B cell (primary cell): ENCODE measurements at regions of chr5 and their contacts with region 1.

Region 1: GRCh38 chr5:65481635-65482295 is at the start of gene ADAMTS6:
- DNase-seq: peak; percentile 85
- ATAC-seq: peak; percentile 87
- H3K4me3 ChIP-seq: peak within 1 kb of the TSS; percentile 69 to 99 (median 74)
- H3K4me3 Mint-ChIP-seq: no peak within 1 kb of the TSS
- H3K27ac ChIP-seq: peak within 1 kb of the TSS; percentile 55 to 81
- H3K27ac Mint-ChIP-seq: peak within 1 kb of the TSS; percentile 90
- H3K4me1 ChIP-seq: peaks cover 0 to 12% of the 10 kb centered on the region in 2 donors
- H3K4me1 Mint-ChIP-seq: peaks cover 7% of the 10 kb centered on the region
- H3K27me3 ChIP-seq: no peaks in the 10 kb centered on the region
- H3K27me3 Mint-ChIP-seq: no peaks in the 10 kb centered on the region
- CTCF ChIP-seq: no peak
- total RNA-seq, gene ADAMTS6: 11.9 and 12.3 TPM in 2 replicates

Region 2: GRCh38 chr5:64811050-64811640 is 670.6 kb before region 1 on chr5:
- CTCF ChIA-PET with region 1: interaction called, 131 read pairs
- POLR2A ChIA-PET with region 1: interaction called, 5 read pairs
- intact Hi-C with region 1: loop called (anchors 1 kb)
- DNase-seq: peak; percentile 56
- ATAC-seq: no peak
- H3K4me3 ChIP-seq: no peak overlapping the region
- H3K4me3 Mint-ChIP-seq: no peak overlapping the region
- H3K27ac ChIP-seq: no peak overlapping the region
- H3K27ac Mint-ChIP-seq: no peak overlapping the region
- H3K4me1 ChIP-seq: no peaks in the 10 kb centered on the region
- H3K4me1 Mint-ChIP-seq: no peaks in the 10 kb centered on the region
- H3K27me3 ChIP-seq: no peaks in the 10 kb centered on the region
- H3K27me3 Mint-ChIP-seq: no peaks in the 10 kb centered on the region
- CTCF ChIP-seq: peak; percentile 73

Region 3: DNA sequence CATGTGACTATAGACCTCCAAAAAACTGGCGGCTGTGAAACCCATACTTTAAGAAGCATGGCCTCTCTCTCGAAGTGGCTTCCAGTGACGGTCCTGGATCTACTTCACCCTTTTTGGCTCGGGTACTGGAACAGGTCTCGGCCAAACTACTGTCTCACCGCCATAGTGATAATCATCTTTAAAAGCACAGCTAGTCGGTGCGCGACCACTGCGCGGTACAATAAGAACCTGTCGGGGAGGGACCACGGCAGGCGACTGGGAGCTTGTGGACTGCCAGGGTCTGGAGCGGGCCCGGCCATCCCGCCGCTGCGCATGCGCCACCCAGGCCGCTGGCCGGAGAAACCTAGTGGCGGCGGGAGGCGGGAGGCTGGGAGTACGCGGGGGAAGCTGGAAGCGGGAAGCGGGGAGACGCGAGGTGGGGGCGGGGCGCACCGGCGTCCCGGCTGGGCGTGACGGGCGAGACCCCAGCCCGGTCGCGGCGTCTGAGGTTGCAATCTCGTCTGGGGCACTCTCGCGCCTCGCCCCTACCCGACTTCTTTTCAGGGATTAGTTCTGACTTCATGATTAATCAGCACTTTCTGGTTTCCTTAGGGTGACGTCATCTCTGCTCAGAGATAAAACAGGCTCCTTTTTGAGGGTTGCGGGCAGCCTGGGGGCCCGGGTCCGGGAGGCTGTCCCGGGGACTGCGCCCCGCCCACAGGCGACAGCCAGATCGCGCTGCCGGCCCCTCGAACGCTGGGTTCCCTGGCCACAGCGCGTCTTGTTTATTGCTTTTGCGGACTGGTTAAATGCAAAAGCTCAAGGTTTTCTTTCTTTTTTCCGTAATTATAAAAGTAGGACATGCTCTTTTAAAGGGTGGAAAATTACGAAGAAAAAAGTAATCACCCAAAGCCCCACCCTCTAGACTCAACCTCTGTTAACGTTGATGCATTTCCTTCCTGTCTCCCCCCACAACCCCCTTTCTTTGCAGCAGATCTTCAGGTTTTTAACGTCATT is 446.3 kb before region 1 on chr5:
- CTCF ChIA-PET with region 1: interaction called, 9 read pairs
- POLR2A ChIA-PET with region 1: no interaction called
- intact Hi-C with region 1: loop called (anchors 2 kb)
- DNase-seq: peak; percentile 83
- ATAC-seq: peak; percentile 81
- H3K4me3 ChIP-seq: peak overlapping the region; percentile 73 to 92 (median 85)
- H3K4me3 Mint-ChIP-seq: peak overlapping the region; percentile 88
- H3K27ac ChIP-seq: peak overlapping the region; percentile 78 to 89
- H3K27ac Mint-ChIP-seq: peak overlapping the region; percentile 88
- H3K4me1 ChIP-seq: peaks cover 25 to 30% of the 10 kb centered on the region in 2 donors
- H3K4me1 Mint-ChIP-seq: peaks cover 27% of the 10 kb centered on the region
- H3K27me3 ChIP-seq: no peaks in the 10 kb centered on the region
- H3K27me3 Mint-ChIP-seq: no peaks in the 10 kb centered on the region
- CTCF ChIP-seq: no peak

Region 4: DNA sequence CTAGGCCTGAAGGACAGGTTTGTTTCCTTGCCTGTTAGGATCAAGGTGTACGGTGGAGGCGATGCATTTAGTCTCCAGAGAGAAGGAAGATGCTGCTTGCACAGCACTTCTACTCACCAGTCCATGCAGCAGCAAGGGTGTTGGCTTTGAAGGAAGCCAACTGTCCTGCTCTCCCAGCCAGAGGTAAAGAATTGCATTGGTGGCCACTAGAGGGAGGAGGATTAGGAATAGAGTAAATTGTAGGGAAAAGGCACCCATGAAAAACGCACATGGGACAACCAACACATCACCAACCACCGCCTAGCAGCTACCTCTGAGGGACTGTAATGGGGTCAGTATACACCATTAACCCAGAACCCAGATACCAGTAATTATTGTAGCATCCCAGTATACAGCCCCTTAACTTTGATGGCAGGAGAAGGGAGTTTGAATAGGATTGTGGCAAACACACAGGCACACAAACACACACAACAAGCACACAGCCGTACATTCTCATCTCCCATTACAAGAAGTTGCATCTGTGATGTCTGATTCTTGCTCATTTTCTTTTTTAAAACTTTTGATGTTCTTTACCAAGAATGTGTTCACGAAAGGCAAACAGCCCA is 267.7 kb before region 1 on chr5:
- CTCF ChIA-PET with region 1: no interaction called
- POLR2A ChIA-PET with region 1: no interaction called
- intact Hi-C with region 1: loop called (anchors 10 kb)
- DNase-seq: peak; percentile 3
- ATAC-seq: no peak
- H3K4me3 ChIP-seq: no peak overlapping the region
- H3K4me3 Mint-ChIP-seq: no peak overlapping the region
- H3K27ac ChIP-seq: no peak overlapping the region
- H3K27ac Mint-ChIP-seq: no peak overlapping the region
- H3K4me1 ChIP-seq: no peaks in the 10 kb centered on the region
- H3K4me1 Mint-ChIP-seq: no peaks in the 10 kb centered on the region
- H3K27me3 ChIP-seq: no peaks in the 10 kb centered on the region
- H3K27me3 Mint-ChIP-seq: no peaks in the 10 kb centered on the region
- CTCF ChIP-seq: no peak

Region 5: DNA sequence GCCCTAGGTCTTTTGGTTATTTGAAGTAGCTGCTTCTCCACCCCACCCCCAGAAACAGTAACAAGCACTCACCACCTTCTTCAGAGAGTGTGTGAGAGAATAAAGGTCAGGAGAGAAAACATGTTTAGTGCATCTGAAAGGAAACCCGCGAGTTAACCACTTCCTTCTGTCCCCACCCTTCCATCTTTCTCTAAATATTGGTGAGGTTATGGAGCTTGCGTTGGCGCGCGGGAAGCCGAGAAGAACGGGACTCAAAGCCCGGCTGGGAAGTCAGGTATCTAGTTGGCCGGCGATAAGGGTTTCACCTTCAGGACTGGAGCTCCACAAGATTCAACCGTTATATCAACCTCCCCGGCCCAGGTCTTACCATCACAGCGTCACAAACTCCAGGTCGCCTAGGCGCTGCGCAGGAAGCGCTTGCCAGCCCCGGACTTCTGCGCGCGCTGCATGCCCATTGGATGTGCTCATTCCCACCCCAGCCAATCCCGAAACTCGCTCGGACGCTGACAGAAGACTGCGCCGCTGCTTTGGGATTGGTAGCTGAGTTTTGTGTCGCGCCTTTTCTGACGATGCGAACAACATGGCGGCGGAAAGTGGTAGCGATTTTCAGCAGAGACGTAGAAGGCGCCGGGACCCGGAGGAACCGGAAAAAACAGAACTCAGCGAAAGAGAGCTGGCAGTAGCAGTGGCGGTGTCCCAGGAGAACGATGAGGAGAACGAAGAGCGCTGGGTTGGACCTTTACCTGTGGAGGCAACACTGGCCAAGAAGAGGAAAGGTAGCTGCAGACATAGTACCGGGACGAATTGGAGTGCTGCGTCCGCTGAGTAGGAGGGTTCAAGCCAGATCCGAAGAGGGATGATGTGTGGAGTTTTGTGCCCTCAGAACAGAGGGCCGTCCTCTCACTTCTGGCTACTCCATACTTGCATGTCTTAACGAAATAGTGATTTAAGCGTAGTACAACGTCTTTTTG is 81.3 kb after region 1 on chr5 and contains the starts of genes CENPK and PPWD1:
- CTCF ChIA-PET with region 1: interaction called, 8 read pairs
- POLR2A ChIA-PET with region 1: no interaction called
- intact Hi-C with region 1: loop called (anchors 2 kb)
- DNase-seq: peak; percentile 95
- ATAC-seq: peak; percentile 99
- H3K4me3 ChIP-seq: peak within 1 kb of the TSS; percentile 74 to 97 (median 91)
- H3K4me3 Mint-ChIP-seq: peak within 1 kb of the TSS; percentile 93
- H3K27ac ChIP-seq: peak within 1 kb of the TSS; percentile 89 to 90
- H3K27ac Mint-ChIP-seq: peak within 1 kb of the TSS; percentile 95
- H3K4me1 ChIP-seq: peaks cover 19 to 20% of the 10 kb centered on the region in 2 donors
- H3K4me1 Mint-ChIP-seq: peaks cover 38% of the 10 kb centered on the region
- H3K27me3 ChIP-seq: no peaks in the 10 kb centered on the region
- H3K27me3 Mint-ChIP-seq: no peaks in the 10 kb centered on the region
- CTCF ChIP-seq: no peak
- total RNA-seq, gene CENPK: 18.4 and 21.0 TPM in 2 replicates
- total RNA-seq, gene PPWD1: 89.4 and 91.0 TPM in 2 replicates